ENCODE measurements at regions of chr5 and their contacts with region 1.

Region 1: GRCh38 chr5:111550279-111551020 is 38.1 kb upstream of the STARD4 start:
- DNase-seq: peak; percentile 88
- H3K4me3 Mint-ChIP-seq: no peak overlapping the region
- H3K27ac Mint-ChIP-seq: peak overlapping the region; percentile 31
- H3K4me1 Mint-ChIP-seq: peaks cover 27% of the 10 kb centered on the region
- H3K27me3 Mint-ChIP-seq: no peaks in the 10 kb centered on the region

Region 2: DNA sequence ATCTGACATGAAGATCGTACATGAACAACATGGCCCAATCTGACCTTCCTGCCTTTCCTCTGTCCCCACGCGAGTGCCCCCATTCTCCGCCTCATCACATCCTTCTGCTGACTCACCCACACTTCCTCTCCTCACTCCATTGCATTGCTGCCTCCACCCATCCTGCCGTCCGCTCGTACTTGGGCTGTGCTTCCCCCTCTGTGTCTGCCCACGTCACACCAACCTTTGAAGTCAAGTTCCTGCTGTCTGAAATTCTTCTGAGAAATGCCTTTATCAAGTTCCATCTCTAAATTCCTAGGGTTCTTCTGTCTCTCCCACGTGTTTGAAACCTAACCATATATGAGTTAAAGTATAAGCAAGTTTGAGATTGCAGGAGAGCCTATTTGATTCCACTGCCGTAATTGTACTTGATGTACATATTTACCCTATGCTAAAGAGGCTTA is 20.1 kb before region 1 on chr5:
- CTCF ChIA-PET with region 1: interaction called, 27 read pairs
- intact Hi-C with region 1: loop called (anchors 1 kb)
- DNase-seq: peak; percentile 92
- H3K4me3 Mint-ChIP-seq: peak overlapping the region; percentile 62
- H3K27ac Mint-ChIP-seq: peak overlapping the region; percentile 83
- H3K4me1 Mint-ChIP-seq: peaks cover 16% of the 10 kb centered on the region
- H3K27me3 Mint-ChIP-seq: no peaks in the 10 kb centered on the region

Region 3: DNA sequence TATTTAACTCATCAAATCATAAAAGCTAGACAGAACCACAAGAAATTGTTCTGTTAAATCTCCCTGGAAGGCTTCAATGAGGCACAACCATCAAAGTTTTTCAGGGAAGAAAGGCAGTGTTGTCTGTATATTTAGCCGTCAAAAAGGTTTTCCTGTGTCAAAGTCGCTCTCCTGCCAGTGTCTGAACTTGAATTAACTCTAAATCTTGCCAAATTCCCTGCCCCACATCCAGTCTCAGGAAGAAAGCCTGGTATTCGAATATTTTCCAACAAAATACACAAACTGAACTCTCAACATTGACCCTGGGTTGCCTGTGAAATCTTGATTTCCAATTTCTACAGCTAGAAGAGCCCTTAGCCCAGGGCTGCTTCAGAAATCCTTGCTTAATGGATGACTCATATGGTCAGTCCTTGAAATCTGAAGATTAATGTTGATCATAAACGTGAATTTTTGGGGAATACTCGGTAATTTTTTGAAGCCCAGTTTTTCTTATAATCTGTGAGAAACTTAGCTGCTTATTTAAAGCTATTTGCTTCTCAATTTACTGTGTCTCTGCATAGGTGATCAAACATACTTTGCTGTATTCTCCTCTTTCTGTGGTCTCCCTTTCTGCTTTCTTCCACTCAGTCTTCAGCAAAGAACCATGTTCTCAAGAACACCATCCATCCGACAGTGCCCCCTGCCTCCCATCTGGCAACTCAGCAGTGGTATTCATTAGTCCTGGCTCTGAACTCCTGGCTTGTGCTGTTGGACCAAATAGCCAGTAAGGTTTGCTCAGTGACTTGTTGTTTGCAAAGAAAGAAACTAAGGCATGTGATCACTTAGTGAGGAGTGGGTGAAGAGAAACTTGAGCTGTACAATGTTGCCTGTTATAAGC is 147.7 kb after region 1 on chr5:
- CTCF ChIA-PET with region 1: interaction called, 5 read pairs
- intact Hi-C with region 1: loop called (anchors 2 kb)
- DNase-seq: peak; percentile 20
- H3K4me3 Mint-ChIP-seq: no peak overlapping the region
- H3K27ac Mint-ChIP-seq: no peak overlapping the region
- H3K4me1 Mint-ChIP-seq: no peaks in the 10 kb centered on the region
- H3K27me3 Mint-ChIP-seq: peaks cover 3% of the 10 kb centered on the region

Region 4: DNA sequence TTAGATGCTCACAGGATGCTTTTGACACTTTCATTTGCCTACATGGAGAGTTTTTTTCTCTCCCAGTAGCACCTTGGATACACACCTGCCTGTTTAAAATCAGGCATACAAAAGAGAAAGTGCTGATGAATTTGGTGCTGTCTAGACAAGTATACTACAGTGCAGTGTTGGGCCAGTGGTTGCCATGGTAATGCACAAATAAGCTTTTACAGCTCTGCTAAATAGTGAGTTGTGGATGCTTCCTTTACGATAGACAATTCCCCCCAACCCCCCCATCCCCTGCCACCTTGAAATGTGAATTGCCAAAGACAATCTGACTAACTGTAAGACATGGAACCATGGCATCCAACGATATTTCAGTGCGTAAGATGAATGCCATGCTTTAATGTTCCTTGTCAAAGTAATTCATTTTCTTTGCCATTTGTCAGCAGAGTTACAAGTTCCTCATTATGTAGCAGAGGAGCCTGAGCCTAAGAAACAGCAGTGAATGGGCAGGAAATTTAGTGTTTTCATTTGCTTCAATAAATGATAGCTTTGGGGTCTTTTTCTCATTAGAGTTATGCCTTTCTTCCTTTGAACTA is 298.0 kb after region 1 on chr5:
- CTCF ChIA-PET with region 1: interaction called, 3 read pairs
- intact Hi-C with region 1: loop called (anchors 10 kb)
- DNase-seq: no peak
- H3K4me3 Mint-ChIP-seq: no peak overlapping the region
- H3K27ac Mint-ChIP-seq: no peak overlapping the region
- H3K4me1 Mint-ChIP-seq: no peaks in the 10 kb centered on the region
- H3K27me3 Mint-ChIP-seq: peaks cover 6% of the 10 kb centered on the region

Region 5: DNA sequence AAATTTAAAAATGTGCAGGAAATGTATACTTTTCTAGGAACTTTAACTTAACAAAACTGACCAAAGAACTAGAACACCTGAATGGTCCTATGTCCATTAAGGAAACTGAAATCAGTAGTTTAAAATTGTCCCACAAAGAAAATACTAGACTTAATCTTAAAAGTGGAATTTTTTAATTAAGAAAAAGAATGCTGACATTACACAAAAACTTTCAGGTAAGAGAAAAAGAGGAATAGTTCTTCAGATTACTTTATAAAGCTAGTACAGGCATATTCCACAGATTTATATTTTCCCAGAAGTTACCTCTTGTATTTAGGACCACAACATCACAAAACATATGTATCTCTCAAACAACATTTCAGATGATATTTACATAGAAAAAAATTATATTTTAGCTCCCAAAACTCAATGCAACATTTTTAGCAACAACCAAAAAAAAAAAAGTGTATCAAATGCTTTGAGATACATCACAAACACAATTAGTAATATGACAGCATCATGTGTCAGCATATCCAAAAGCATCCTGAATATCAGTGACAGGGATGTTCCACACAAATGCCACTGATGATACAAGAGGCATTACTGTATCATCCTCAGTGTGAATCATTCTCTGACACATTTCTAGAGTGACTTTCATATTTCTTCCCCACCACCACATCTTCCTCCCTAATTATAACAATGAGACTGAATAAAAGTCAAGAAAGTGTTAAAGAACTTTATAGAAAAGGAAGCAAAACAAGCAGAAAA is 604.7 kb after region 1 on chr5:
- CTCF ChIA-PET with region 1: no interaction called
- intact Hi-C with region 1: loop called (anchors 2 kb)
- DNase-seq: no peak
- H3K4me3 Mint-ChIP-seq: no peak overlapping the region
- H3K27ac Mint-ChIP-seq: no peak overlapping the region
- H3K4me1 Mint-ChIP-seq: peaks cover 19% of the 10 kb centered on the region
- H3K27me3 Mint-ChIP-seq: no peaks in the 10 kb centered on the region